Calu3 (cell line): ENCODE measurements at regions of chr7 and their contacts with region 1.

Region 1: DNA sequence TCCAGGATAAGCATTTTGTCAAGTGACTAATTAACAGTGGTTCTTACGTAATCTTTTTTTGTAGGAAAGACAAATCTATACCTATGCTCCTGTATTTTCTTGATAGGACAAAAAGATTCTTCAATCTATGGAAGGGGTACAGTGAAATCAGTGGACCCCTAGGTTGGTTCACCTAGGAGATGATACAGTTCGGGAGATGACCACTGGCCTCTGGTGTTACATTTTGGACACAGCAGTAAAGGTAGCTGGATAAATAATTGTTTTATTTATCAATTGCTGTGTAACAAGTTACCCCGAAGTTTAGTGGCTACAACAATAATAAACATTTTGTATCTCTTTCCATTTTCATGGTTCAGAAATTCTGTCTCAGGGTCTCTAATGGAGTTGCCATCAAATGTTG is 288.2 kb upstream of the MAGI2 start:
- DNase-seq: no peak
- H3K4me3 Mint-ChIP-seq: no peak overlapping the region
- H3K27ac Mint-ChIP-seq: no peak overlapping the region
- H3K4me1 Mint-ChIP-seq: no peaks in the 10 kb centered on the region
- H3K27me3 Mint-ChIP-seq: no peaks in the 10 kb centered on the region
- CTCF ChIP-seq: no peak

Region 2: GRCh38 chr7:79504712-79505389 is 236.8 kb before region 1 on chr7:
- CTCF ChIA-PET with region 1: no interaction called
- intact Hi-C with region 1: loop called (anchors 5 kb)
- DNase-seq: no peak
- H3K4me3 Mint-ChIP-seq: no peak overlapping the region
- H3K27ac Mint-ChIP-seq: no peak overlapping the region
- H3K4me1 Mint-ChIP-seq: no peaks in the 10 kb centered on the region
- H3K27me3 Mint-ChIP-seq: no peaks in the 10 kb centered on the region
- CTCF ChIP-seq: no peak

Region 3: DNA sequence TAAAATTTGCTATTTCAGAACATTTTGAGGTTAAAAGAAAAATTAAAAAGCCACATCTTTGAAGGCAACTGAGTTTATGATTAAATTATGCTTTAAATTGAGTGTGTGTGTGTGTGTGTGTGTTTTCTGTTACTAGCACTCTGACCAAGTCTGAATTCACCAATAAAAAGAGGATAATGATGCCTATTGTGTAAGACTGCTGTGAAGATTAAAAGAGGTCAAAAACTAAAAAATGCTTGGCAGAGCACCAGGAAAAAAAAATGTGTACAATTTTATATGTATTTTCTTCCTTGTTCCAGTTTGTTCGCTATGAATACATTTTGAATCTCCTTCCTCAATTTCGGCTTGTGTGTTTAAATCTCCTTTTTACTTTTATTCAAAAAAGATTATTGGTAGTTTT is 28.4 kb after region 1 on chr7:
- CTCF ChIA-PET with region 1: no interaction called
- intact Hi-C with region 1: no loop called
- DNase-seq: no peak
- H3K4me3 Mint-ChIP-seq: no peak overlapping the region
- H3K27ac Mint-ChIP-seq: no peak overlapping the region
- H3K4me1 Mint-ChIP-seq: no peaks in the 10 kb centered on the region
- H3K27me3 Mint-ChIP-seq: no peaks in the 10 kb centered on the region
- CTCF ChIP-seq: no peak